MCF 10A (cell line): ENCODE measurements at regions of chr6 and their contacts with region 1.

Region 1: GRCh38 chr6:47651505-47651944 is 46.9 kb upstream of the ADGRF4 start:
- DNase-seq: peak; percentile 66
- H3K4me3 Mint-ChIP-seq: no peak overlapping the region
- H3K27ac Mint-ChIP-seq: no peak overlapping the region
- H3K4me1 Mint-ChIP-seq: peaks cover 11% of the 10 kb centered on the region
- H3K27me3 Mint-ChIP-seq: no peaks in the 10 kb centered on the region
- CTCF ChIP-seq: no peak

Region 2: GRCh38 chr6:47669684-47670513 is 18.4 kb after region 1 on chr6:
- CTCF ChIA-PET with region 1: interaction called, 5 read pairs
- POLR2A ChIA-PET with region 1: interaction called, 18 read pairs
- intact Hi-C with region 1: no loop called
- DNase-seq: peak; percentile 82
- H3K4me3 Mint-ChIP-seq: peak overlapping the region; percentile 47
- H3K27ac Mint-ChIP-seq: peak overlapping the region; percentile 91
- H3K4me1 Mint-ChIP-seq: peaks cover 28% of the 10 kb centered on the region
- H3K27me3 Mint-ChIP-seq: no peaks in the 10 kb centered on the region
- CTCF ChIP-seq: no peak

Region 3: GRCh38 chr6:49423817-49424216 is 1772.3 kb after region 1 on chr6:
- CTCF ChIA-PET with region 1: no interaction called
- POLR2A ChIA-PET with region 1: no interaction called
- intact Hi-C with region 1: loop called (anchors 10 kb)
- DNase-seq: peak; percentile 23
- H3K4me3 Mint-ChIP-seq: no peak overlapping the region
- H3K27ac Mint-ChIP-seq: no peak overlapping the region
- H3K4me1 Mint-ChIP-seq: no peaks in the 10 kb centered on the region
- H3K27me3 Mint-ChIP-seq: no peaks in the 10 kb centered on the region
- CTCF ChIP-seq: peak; percentile 43